PC-3 (cell line): ENCODE measurements at regions of chr10 and their contacts with region 1.

Region 1: DNA sequence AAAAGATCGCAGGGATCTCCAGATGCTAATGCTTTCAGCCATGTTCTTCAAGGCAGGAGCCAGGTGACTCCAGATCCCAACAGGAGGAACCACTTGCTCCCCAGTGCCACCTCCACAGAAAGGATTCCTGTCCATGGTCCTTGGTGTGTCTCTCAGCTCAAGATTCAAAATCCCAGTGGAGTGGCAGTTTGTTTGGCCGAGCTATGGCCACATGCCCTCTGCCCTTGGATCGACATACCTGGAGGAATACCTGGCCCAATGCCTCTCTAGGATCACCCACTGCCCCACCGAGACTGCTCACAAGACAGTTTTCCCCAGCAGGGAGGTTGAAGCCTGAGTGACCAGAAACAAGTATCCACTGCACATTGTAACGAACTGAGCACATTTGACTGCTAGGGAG is 3.9 kb upstream of the GPRIN2 start:
- DNase-seq: no peak
- ATAC-seq: no peak
- H3K4me3 ChIP-seq: no peak overlapping the region
- H3K27ac ChIP-seq: no peak overlapping the region
- H3K4me1 ChIP-seq: no peaks in the 10 kb centered on the region; the same call in 1 of the 2 replicates
- H3K27me3 ChIP-seq: no peaks in the 10 kb centered on the region
- CTCF ChIP-seq: no peak

Region 2: DNA sequence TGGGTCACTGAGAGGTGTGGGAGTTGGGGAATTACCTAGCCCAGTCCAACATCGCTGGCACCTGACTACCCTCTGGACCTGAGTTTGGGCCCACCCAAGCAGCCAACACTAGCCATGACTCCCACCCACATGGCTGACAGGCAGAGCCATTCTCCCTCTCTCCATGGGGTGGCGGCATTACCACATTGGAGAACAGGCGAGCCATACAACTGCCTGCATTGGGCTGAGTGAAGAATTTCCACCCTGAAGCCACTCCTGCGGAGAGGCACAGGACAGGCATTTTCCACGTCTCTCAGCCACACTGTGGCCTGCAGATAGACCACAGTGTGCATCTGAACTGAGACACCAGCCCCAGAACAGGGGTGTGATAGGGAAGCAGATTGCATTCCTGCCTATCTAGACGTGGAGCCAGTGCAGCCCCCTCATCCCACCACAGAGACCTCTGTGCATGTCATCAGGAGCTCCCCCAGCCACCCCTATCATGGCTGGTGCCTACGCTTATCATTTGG is 331.8 kb before region 1 on chr10:
- CTCF ChIA-PET with region 1: no interaction called
- POLR2A ChIA-PET with region 1: no interaction called
- intact Hi-C with region 1: loop called (anchors 10 kb)
- DNase-seq: peak; percentile 68
- ATAC-seq: peak; percentile 93
- H3K4me3 ChIP-seq: no peak overlapping the region
- H3K27ac ChIP-seq: no peak overlapping the region
- H3K4me1 ChIP-seq: no peaks in the 10 kb centered on the region
- H3K27me3 ChIP-seq: no peaks in the 10 kb centered on the region
- CTCF ChIP-seq: peak; percentile 76

Region 3: GRCh38 chr10:46530249-46531186 is 29.9 kb before region 1 on chr10:
- CTCF ChIA-PET with region 1: no interaction called
- POLR2A ChIA-PET with region 1: no interaction called
- intact Hi-C with region 1: no loop called
- DNase-seq: no peak
- ATAC-seq: no peak
- H3K4me3 ChIP-seq: no peak overlapping the region
- H3K27ac ChIP-seq: no peak overlapping the region
- H3K4me1 ChIP-seq: peaks cover 4% of the 10 kb centered on the region
- H3K27me3 ChIP-seq: no peaks in the 10 kb centered on the region
- CTCF ChIP-seq: no peak